B cell (primary cell): ENCODE measurements at regions of chr11 and their contacts with region 1.

Region 1: DNA sequence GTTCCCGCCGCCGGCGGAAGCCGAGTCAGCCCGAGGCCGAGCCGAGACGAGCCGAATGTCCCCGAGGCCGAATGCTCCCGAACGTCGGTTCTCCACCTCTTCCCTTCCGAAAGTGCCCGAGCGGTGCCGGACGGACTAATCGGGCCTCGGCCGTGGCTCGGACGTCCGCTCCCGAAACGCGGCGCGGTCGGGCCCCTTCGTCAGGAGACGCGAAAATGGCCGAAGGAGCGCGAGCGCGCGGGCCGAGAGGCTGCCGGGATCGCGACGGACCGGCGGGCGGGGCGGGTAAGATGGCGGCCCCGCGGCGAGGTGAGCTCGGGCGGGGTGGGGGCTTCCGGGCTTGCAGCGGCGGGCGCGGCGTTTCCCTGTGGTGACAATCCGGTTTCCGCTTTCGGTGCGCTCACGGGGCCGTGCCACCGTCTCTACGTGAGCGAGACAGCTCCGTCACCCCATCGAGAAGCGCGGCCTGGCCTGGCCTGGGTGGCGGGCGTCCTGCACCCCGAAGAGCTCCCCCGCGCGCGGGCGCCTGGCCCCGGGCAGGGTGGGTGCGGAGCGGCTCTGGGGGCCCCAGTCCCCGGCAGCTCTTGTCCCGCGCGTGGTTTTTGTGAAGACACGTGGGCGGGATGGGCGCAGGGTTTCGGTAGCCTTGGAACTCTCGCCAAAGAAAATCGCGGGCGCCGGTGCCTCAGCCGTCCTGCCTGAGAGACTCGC is at the start of gene TMEM80:
- DNase-seq: peak; percentile 99
- ATAC-seq: peak; percentile 65
- H3K4me3 ChIP-seq: peak within 1 kb of the TSS; percentile 52 to 97 (median 84)
- H3K4me3 Mint-ChIP-seq: peak within 1 kb of the TSS; percentile 88
- H3K27ac ChIP-seq: peak within 1 kb of the TSS; percentile 100
- H3K27ac Mint-ChIP-seq: peak within 1 kb of the TSS; percentile 95
- H3K4me1 ChIP-seq: peaks cover 30 to 36% of the 10 kb centered on the region in 2 donors
- H3K4me1 Mint-ChIP-seq: peaks cover 48% of the 10 kb centered on the region
- H3K27me3 ChIP-seq: no peaks in the 10 kb centered on the region
- H3K27me3 Mint-ChIP-seq: no peaks in the 10 kb centered on the region
- CTCF ChIP-seq: no peak
- total RNA-seq, gene TMEM80: 77.8 and 84.1 TPM in 2 replicates

Region 2: DNA sequence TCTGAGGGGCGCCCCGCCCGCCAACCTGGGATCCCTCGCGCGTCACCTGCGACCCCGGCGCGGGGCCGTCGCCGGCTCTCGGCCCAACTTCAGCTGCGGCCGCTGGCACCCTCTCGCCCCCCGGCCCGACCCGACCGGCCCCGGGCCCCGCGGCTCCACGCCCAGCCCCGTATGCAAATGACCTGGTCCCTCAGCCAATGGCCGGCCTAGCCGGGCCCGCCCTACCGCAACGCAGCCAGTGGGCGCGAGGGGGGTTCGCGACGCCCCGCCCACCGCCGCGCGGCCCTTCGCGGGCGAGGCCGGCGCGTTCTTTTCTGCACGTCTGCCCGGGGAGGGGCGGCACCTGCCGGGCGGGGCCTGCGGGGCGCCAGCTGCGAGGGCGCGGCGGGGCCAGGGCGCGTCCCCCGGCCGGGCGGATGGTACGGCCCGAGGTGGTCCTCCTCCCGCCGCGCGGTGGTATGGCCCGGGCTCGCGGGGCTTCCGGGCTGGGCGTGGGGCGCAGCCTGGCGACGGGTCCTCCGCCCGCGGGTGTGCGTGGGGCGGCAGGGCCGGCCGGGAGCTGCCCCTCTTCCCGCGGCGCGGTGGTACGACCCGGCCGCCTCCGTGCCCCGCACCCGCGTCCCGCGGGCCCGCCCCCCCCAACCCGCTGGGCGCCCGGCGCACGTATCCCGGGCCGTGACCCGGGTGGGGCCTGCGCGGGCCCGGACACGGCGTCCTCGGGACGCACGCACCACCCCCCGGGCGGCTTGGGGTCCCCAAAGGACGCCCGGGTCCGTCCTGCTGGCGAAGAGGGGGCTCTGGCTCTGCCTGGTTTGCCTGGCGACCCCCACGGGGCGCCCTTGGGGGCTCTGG is 127.2 kb before region 1 on chr11:
- CTCF ChIA-PET with region 1: no interaction called
- POLR2A ChIA-PET with region 1: interaction called, 4 read pairs
- intact Hi-C with region 1: loop called (anchors 5 kb)
- DNase-seq: peak; percentile 96
- ATAC-seq: peak; percentile 91
- H3K4me3 ChIP-seq: peak overlapping the region; percentile 30 to 85 (median 68)
- H3K4me3 Mint-ChIP-seq: peak overlapping the region; percentile 83
- H3K27ac ChIP-seq: peak overlapping the region; percentile 50 to 67
- H3K27ac Mint-ChIP-seq: peak overlapping the region; percentile 37
- H3K4me1 ChIP-seq: peaks cover 10 to 13% of the 10 kb centered on the region in 2 donors
- H3K4me1 Mint-ChIP-seq: peaks cover 9% of the 10 kb centered on the region
- H3K27me3 ChIP-seq: peaks cover 0 to 6% (median 2%) of the 10 kb centered on the region in 4 experiments
- H3K27me3 Mint-ChIP-seq: no peaks in the 10 kb centered on the region
- CTCF ChIP-seq: no peak

Region 3: GRCh38 chr11:597166-597725 is 98.4 kb before region 1 on chr11:
- CTCF ChIA-PET with region 1: no interaction called
- POLR2A ChIA-PET with region 1: no interaction called
- intact Hi-C with region 1: no loop called
- DNase-seq: no peak
- ATAC-seq: no peak
- H3K4me3 ChIP-seq: no peak overlapping the region
- H3K4me3 Mint-ChIP-seq: no peak overlapping the region
- H3K27ac ChIP-seq: no peak overlapping the region
- H3K27ac Mint-ChIP-seq: no peak overlapping the region
- H3K4me1 ChIP-seq: no peaks in the 10 kb centered on the region
- H3K4me1 Mint-ChIP-seq: no peaks in the 10 kb centered on the region
- H3K27me3 ChIP-seq: no peaks in the 10 kb centered on the region
- H3K27me3 Mint-ChIP-seq: no peaks in the 10 kb centered on the region
- CTCF ChIP-seq: no peak

Region 4: DNA sequence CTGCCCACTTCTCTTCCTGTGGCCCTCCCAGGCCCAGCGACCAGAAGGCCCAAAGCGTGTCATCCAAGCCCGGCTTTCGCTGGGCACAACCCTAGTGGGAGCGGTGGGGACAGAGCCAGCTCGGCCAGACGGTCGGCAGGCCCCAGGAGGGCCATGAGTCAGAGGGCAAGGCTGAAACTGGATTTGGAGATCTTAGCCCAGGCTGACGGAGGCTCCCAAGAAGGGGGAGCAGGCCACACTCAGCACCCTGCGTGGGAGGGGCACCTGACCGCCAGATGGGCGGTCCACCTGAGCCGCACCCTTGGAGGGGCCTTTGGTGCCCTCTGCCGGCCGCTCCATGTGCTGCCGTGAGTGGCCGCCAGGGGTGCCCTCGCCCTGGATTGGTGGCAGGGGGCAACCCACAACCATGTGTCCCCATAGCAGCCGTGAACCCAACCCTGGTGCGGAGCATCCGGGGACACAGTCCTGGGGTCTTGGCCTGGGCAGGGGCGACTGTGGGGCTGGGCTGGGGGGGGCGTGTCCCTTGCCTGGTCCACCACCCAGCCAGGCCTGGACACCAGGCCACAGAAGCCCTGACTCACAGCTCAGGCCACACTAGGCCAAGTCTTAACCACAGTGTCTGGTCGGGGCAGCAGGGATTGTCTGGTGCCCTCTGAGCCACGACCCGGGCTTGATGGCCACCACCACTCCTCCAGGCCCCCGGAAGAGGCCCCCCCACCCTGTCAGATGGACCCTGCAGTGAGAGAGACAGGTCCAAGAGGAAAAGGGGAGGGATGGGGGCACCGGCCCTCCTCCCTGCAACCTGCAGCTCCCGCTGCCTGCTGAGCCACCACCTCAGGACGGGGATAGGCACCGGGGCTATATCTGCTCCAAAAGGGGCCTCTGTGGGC is 32.4 kb after region 1 on chr11:
- CTCF ChIA-PET with region 1: interaction called, 60 read pairs
- POLR2A ChIA-PET with region 1: interaction called, 105 read pairs
- intact Hi-C with region 1: loop called (anchors 1 kb)
- DNase-seq: peak; percentile 85
- ATAC-seq: peak; percentile 85
- H3K4me3 ChIP-seq: no peak overlapping the region
- H3K4me3 Mint-ChIP-seq: no peak overlapping the region
- H3K27ac ChIP-seq: no peak overlapping the region
- H3K27ac Mint-ChIP-seq: no peak overlapping the region
- H3K4me1 ChIP-seq: peaks cover 14 to 29% of the 10 kb centered on the region in 2 donors
- H3K4me1 Mint-ChIP-seq: peaks cover 12% of the 10 kb centered on the region
- H3K27me3 ChIP-seq: peaks cover 0 to 24% (median 0%) of the 10 kb centered on the region in 4 experiments
- H3K27me3 Mint-ChIP-seq: peaks cover 4% of the 10 kb centered on the region
- CTCF ChIP-seq: peak; percentile 97

Region 5: DNA sequence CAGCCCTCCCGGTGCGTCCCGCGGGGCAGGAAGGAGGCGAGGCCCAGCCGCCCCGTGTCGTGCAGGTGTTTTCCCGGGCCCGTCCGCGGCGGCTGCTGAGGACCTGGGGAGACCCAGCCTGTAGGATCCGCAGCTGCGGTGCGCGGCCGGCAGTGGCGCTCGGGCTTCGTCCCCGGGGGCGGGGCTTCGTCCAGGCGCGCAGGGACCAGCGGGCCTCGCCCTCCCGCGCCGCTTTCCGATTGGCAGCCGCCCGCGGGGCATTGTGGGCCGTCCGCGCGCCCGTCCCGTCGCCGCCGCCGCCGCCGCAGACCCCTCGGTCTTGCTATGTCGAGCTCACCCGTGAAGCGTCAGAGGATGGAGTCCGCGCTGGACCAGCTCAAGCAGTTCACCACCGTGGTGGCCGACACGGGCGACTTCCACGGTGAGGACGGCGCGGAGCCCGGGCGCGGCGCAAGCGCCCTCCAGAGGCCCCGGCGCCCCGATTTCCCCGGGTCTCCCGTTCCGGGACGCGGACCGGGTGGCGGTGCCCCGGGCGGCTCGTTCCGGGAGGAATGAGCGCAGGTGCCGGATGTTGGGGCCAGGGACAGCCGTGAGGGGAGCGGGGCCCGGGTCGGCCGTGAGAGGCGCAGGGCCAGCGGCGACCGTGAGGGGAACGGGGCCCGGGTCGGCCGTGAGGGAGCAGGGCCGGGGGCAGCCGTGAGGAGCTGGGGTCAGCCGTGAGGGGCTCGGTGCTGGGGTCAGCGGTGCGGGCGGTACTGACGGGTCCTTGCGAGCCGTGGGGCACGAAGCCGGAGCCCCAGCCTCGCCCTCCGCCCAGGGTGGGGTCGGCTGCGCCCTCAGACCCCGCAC is 51.7 kb after region 1 on chr11 and contains the start of gene TALDO1:
- CTCF ChIA-PET with region 1: interaction called, 13 read pairs
- POLR2A ChIA-PET with region 1: interaction called, 4 read pairs
- intact Hi-C with region 1: no loop called
- DNase-seq: peak; percentile 90
- ATAC-seq: peak; percentile 97
- H3K4me3 ChIP-seq: peak within 1 kb of the TSS; percentile 56 to 88 (median 73)
- H3K4me3 Mint-ChIP-seq: peak within 1 kb of the TSS; percentile 88
- H3K27ac ChIP-seq: peak within 1 kb of the TSS; percentile 31 to 77
- H3K27ac Mint-ChIP-seq: peak within 1 kb of the TSS; percentile 83
- H3K4me1 ChIP-seq: peaks cover 17 to 27% of the 10 kb centered on the region in 2 donors
- H3K4me1 Mint-ChIP-seq: peaks cover 16% of the 10 kb centered on the region
- H3K27me3 ChIP-seq: no peaks in the 10 kb centered on the region
- H3K27me3 Mint-ChIP-seq: no peaks in the 10 kb centered on the region
- CTCF ChIP-seq: no peak
- total RNA-seq, gene TALDO1: 105 and 116 TPM in 2 replicates

Region 6: DNA sequence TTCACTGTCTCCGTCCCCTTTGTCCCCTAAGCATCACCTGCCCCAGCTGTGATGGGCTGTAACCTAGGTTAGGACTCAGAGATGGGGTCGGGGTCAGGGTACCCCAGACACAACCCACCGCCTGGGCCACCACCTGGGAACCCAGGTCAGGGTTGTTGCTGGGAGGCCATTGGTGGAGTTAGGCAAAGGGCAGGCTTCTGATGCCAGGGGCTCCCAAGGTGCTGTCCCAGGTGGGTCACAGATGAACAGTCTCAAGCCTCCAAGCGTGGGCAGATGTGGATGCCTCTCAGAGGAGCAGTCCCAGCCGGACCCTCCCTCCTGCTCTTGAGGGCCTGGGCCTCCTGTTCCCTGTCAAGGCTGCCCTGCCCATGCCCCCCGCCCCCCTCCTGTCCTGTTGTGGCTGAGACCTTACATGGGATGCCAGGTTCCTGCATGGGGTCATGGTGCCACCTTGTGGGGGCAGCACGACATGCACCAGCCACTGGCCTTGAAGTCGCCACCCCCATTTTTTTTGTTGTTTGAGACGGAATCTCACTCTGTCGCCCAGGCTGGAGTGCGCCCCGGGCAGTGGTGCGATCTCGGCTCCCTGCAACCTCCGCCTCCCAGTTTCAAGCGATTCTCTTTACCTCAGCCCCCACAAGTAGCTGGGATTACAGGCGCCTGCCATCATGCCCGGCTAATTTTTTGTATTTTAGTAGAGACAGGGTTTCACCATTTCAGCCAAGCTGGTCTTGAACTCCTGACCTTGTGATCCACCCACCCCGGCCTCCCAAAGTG is 69.5 kb after region 1 on chr11:
- CTCF ChIA-PET with region 1: no interaction called
- POLR2A ChIA-PET with region 1: interaction called, 4 read pairs
- intact Hi-C with region 1: loop called (anchors 1 kb)
- DNase-seq: peak; percentile 81
- ATAC-seq: peak; percentile 86
- H3K4me3 ChIP-seq: no peak overlapping the region
- H3K4me3 Mint-ChIP-seq: no peak overlapping the region
- H3K27ac ChIP-seq: peak overlapping the region in 1 of 2 donors; percentile 12
- H3K27ac Mint-ChIP-seq: peak overlapping the region; percentile 50
- H3K4me1 ChIP-seq: no peaks in the 10 kb centered on the region
- H3K4me1 Mint-ChIP-seq: peaks cover 2% of the 10 kb centered on the region
- H3K27me3 ChIP-seq: no peaks in the 10 kb centered on the region
- H3K27me3 Mint-ChIP-seq: no peaks in the 10 kb centered on the region
- CTCF ChIP-seq: peak; percentile 74

Region 7: DNA sequence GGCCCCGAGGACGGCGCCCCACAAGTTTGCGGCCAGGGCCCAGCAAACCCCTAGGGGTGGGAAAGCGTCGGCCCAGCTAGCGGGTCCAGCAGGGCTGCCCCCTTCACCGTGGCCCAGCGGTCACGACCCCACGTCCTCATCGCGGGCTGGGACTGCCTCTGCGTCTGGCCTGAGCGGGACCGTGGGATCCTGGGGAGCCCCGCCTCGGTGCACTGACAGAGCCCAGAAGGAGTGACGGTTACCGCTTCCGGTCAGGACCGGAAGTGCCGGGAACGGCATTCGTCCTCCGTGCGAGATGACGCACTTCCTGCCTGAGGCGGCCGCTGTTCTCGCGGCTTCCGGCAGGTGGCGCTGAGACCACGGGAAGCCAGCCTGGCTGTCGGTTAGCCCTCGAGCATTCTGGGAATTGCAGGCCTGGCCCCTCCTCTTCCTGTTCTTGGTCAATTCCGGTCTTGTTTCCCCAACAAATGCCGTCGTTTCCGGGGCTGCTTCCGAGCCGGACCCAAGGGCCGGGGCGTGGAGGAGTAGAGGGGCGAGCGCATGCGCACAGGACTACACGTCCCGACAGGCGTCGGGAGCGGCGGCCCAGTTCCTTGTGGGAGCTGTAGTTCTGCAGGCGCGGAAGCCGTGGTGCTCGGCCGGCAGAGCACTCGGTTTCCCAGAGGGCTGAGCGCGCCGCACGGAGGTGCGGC is 1704.5 kb after region 1 on chr11 and contains the start of gene TSSC4:
- CTCF ChIA-PET with region 1: no interaction called
- POLR2A ChIA-PET with region 1: no interaction called
- intact Hi-C with region 1: loop called (anchors 5 kb)
- DNase-seq: peak; percentile 100
- ATAC-seq: peak; percentile 81
- H3K4me3 ChIP-seq: peak within 1 kb of the TSS; percentile 87 to 100 (median 95)
- H3K4me3 Mint-ChIP-seq: peak within 1 kb of the TSS; percentile 90
- H3K27ac ChIP-seq: peak within 1 kb of the TSS; percentile 91 to 93
- H3K27ac Mint-ChIP-seq: peak within 1 kb of the TSS; percentile 98
- H3K4me1 ChIP-seq: peaks cover 26 to 40% of the 10 kb centered on the region in 2 donors
- H3K4me1 Mint-ChIP-seq: peaks cover 25% of the 10 kb centered on the region
- H3K27me3 ChIP-seq: no peaks in the 10 kb centered on the region
- H3K27me3 Mint-ChIP-seq: no peaks in the 10 kb centered on the region
- CTCF ChIP-seq: peak; percentile 94
- total RNA-seq, gene TSSC4: 57.5 and 59.5 TPM in 2 replicates